GM12878 (cell line): ENCODE measurements at regions of chrX and their contacts with region 1.

Region 1: GRCh38 chrX:31223817-31224216 is 152.0 kb upstream of the FTHL17 start:
- DNase-seq: no peak
- ATAC-seq: peak; percentile 86
- H3K4me3 ChIP-seq: no peak overlapping the region
- H3K27ac ChIP-seq: peak overlapping the region; percentile 18; the same call in 1 of the 2 replicates
- H3K4me1 ChIP-seq: peaks cover 10% of the 10 kb centered on the region
- H3K27me3 ChIP-seq: no peaks in the 10 kb centered on the region
- CTCF ChIP-seq: 0 out of 6 replicates have a peak, but pooled peaks of 1 of the 3 experiments have one; percentile 4
- EP300 ChIP-seq: no peak
- POLR2A ChIP-seq: no peak
- RAD21 ChIP-seq: no peak

Region 2: DNA sequence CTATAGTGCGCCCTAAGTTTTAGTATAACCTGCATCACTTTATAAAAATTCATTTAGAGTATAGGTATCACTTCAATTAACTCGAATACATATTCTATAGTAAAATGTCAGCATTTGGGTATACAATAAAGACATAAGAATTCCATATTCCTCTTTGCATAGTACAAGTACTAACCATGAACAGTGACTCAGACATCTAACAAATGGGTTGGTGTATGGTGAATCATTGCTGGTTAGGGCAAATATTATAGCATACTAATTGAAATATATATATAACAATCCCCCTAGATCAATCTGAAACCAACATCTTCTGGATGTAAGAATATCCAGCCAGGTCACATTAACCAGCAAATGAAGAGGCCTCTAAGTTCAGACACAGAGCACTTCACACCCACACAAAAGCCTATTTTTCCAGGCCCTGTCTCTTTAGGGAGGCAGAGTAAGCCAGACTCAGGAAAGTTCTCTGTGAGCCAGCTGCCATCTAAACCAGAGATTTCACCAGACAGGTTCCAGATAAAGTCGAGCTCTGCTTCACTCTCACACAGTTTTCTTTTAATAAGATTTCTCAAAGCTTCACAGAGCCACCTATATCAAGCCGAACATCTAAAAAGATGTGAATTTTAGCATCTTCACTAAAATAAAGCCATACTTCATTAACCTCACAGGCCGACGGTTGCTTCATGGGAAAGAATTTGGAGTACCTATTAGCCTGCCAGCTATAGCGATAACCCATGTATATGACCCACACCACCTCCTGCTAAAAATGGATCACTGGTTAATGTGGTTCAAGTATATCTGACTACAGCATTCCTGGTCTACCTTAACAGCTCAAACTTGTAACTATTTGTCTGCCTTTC is 48.0 kb after region 1 on chrX:
- CTCF ChIA-PET with region 1: interaction called, 5 read pairs
- POLR2A ChIA-PET with region 1: interaction called, 4 read pairs
- RAD21 ChIA-PET with region 1: interaction called, 6 read pairs
- SMC1A ChIA-PET with region 1: interaction called, 12 read pairs
- in situ Hi-C with region 1: no loop called
- intact Hi-C with region 1: no loop called
- DNase-seq: no peak
- ATAC-seq: peak; percentile 59
- H3K4me3 ChIP-seq: no peak overlapping the region
- H3K27ac ChIP-seq: no peak overlapping the region
- H3K4me1 ChIP-seq: no peaks in the 10 kb centered on the region
- H3K27me3 ChIP-seq: 0 out of 4 replicates have a peak, but pooled peaks cover 0 to 2% of the 10 kb centered on the region in 2 experiments
- CTCF ChIP-seq: no peak
- EP300 ChIP-seq: no peak
- POLR2A ChIP-seq: no peak
- RAD21 ChIP-seq: no peak